ENCODE measurements at regions of chr19 and their contacts with region 1.

Region 1: DNA sequence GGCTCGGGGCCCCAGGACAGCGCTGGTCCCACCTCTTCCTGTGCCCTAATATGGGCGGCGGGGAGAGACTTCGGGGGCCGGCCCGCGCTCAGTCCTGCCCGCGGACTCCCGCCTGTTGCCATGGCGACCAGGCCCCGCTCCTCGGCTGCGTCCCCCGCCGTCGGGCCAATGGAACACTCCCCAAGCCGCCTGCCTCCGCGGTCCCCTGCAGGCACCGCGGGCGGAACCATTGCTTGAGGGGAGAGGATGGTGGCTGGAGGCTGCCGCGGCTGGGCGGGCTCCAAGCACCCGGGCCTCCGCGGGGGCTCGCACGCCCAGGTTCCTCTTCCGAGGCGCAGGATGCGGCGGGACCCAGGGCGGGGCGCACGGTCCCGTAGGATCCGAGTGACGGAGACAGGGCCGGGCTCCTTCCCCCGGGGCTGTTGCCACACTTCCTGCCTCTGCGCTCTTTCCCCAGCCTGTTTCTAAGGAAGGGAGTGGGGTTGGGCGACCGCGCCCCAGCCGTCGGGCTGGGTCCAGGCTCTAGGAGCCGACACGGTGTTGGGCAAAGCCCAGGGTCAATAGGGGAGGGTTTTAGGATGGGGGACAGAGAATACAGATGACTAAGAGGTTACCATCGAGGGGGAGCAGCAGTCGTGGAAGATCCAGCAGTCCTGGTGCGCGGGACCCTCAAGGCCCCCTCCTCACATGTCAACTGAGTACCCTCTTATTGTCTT is 1.2 kb upstream of the JUNB start:
- DNase-seq: peak; percentile 77

Region 2: DNA sequence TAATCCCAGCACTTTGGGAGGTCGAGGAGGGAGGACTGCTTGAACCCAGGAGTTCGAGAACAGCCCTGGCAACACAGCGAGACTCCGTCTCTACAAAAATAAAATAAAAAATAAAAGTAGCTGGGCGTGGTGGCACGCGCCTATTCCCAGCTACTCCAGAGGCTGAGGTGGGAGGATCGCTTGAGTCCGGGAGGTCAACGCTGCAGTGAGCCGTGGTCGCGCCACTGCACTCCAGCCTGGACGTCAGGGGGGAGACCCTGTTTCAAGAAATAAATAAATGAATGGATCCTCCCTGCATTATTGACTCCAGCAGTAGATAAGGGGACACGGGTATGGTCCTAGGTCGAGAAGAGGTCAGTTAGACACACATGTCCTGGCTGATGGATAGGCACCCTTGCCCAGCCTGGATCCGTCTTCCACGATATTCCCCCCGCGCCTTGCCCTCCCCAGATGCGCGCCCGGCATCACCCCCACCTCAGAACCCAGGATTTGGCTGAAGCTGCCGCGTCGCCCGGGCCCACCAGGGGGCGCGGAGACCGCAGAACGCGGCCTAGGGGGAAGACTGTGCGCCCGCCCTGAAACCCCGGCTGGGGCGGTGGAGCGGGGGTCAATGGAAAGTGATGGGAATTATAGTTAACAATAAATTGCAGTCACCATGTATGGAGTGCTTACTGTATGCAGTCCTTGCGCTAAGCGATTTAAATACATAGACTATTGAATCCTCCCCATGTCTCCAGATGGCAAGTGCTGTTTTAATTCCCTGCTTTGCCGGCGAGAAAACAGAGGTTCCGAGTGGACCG is 12.6 kb before region 1 on chr19:
- CTCF ChIA-PET with region 1: interaction called, 19 read pairs
- POLR2A ChIA-PET with region 1: interaction called, 55 read pairs
- DNase-seq: peak; percentile 76

Region 3: GRCh38 chr19:12806239-12807081 is 16.4 kb after region 1 on chr19 and contains the start of gene RNASEH2A:
- CTCF ChIA-PET with region 1: no interaction called
- POLR2A ChIA-PET with region 1: interaction called, 19 read pairs
- DNase-seq: peak; percentile 96

Measured in HEK293T (cell line).